ENCODE measurements at regions of chr11 and their contacts with region 1.

Region 1: GRCh38 chr11:117817368-117818040 is 7.0 kb downstream of the FXYD2 start:
- DNase-seq: no peak
- H3K4me3 ChIP-seq: peak overlapping the region in 1 of 2 donors; percentile 18
- H3K27ac ChIP-seq: peak overlapping the region; percentile 48
- H3K4me1 ChIP-seq: peaks cover 32% of the 10 kb centered on the region
- H3K27me3 ChIP-seq: no peaks in the 10 kb centered on the region
- CTCF ChIP-seq: peak; percentile 97 to 99 (median 98)
- POLR2A ChIP-seq: no peak

Region 2: DNA sequence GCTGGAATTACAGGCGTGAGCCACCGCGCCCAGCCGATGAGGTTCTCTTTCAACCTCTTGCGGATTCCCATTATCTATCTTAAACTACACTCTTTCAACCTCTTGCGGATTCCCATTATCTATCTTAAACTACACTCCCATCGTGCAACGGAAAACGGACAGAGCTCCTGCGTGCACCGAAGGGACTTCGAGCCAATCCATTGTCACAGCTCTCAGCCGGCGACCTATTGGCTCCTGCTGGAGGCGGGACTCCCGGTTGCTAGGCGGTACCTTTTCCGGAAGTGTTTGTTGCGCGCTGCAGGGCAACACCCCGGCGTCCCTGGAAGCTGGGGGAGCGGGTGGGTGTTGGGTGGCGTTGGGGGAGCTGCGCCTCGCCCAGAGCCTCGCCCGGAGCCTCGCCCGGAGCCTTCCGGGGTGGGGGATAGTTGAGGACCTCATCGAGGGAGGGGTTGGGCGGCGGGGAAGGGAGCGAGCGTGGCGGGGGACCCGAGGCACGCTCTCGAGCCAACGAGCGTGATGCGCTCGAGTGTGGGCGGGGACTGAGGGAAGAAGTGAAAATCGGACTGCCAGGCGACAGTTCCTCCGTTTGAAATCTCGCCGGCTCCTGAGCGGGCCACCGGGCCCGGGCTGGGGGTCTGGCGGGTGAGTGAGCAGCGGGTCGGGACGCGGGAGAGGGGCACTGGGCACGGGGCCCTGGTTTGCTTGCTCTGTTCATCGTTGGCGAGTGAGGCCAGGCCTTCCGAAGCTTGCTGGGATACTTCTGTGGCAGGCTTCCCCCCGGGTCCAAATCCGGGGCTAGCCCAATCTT is 489.7 kb before region 1 on chr11 and contains the start of gene CEP164:
- intact Hi-C with region 1: no loop called
- DNase-seq: peak in 1 of 2 donors; percentile 97
- H3K4me3 ChIP-seq: peak within 1 kb of the TSS; percentile 62 to 77
- H3K27ac ChIP-seq: peak within 1 kb of the TSS; percentile 80
- H3K4me1 ChIP-seq: peaks cover 11% of the 10 kb centered on the region
- H3K27me3 ChIP-seq: no peaks in the 10 kb centered on the region
- CTCF ChIP-seq: no peak
- POLR2A ChIP-seq: peak in 1 of 2 donors; percentile 24
- total RNA-seq, gene CEP164: 21.6 TPM

Region 3: DNA sequence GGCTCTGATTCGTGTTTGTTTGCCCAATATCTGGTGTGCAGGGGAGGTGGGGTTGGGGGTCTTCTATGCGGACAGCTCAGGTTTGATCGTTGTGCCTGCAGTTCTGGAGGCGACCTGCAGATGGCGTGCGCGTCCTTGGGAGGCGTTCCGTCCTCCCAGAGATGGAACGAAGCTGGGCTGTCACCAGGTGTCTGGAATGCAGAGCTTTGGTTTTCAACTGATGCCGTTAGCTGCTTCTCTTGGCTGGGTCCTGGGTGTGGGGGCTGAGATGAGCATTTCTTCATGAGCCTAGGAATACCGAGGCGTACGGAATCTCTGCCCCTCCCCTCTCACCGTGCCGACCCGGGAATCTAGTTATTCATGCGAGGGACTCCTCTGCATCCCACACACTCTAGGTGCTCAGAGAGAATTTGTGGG is 391.2 kb before region 1 on chr11:
- intact Hi-C with region 1: loop called (anchors 10 kb)
- DNase-seq: no peak
- H3K4me3 ChIP-seq: no peak overlapping the region
- H3K27ac ChIP-seq: no peak overlapping the region
- H3K4me1 ChIP-seq: peaks cover 7% of the 10 kb centered on the region
- H3K27me3 ChIP-seq: no peaks in the 10 kb centered on the region
- CTCF ChIP-seq: peak; percentile 73 to 90 (median 84)
- POLR2A ChIP-seq: no peak

Region 4: GRCh38 chr11:117743123-117743815 is 74.2 kb before region 1 on chr11:
- intact Hi-C with region 1: no loop called
- DNase-seq: no peak
- H3K4me3 ChIP-seq: no peak overlapping the region
- H3K27ac ChIP-seq: no peak overlapping the region
- H3K4me1 ChIP-seq: no peaks in the 10 kb centered on the region
- H3K27me3 ChIP-seq: no peaks in the 10 kb centered on the region
- CTCF ChIP-seq: no peak
- POLR2A ChIP-seq: no peak